GM23248 (cell line): ENCODE measurements at regions of chr6 and their contacts with region 1.

Region 1: GRCh38 chr6:138817822-138818308 is 22.0 kb downstream of the ECT2L start:
- DNase-seq: peak; percentile 88
- H3K4me3 ChIP-seq: no peak overlapping the region
- H3K27ac ChIP-seq: peak overlapping the region; percentile 66
- H3K4me1 ChIP-seq: peaks cover 8% of the 10 kb centered on the region
- H3K27me3 ChIP-seq: no peaks in the 10 kb centered on the region

Region 2: DNA sequence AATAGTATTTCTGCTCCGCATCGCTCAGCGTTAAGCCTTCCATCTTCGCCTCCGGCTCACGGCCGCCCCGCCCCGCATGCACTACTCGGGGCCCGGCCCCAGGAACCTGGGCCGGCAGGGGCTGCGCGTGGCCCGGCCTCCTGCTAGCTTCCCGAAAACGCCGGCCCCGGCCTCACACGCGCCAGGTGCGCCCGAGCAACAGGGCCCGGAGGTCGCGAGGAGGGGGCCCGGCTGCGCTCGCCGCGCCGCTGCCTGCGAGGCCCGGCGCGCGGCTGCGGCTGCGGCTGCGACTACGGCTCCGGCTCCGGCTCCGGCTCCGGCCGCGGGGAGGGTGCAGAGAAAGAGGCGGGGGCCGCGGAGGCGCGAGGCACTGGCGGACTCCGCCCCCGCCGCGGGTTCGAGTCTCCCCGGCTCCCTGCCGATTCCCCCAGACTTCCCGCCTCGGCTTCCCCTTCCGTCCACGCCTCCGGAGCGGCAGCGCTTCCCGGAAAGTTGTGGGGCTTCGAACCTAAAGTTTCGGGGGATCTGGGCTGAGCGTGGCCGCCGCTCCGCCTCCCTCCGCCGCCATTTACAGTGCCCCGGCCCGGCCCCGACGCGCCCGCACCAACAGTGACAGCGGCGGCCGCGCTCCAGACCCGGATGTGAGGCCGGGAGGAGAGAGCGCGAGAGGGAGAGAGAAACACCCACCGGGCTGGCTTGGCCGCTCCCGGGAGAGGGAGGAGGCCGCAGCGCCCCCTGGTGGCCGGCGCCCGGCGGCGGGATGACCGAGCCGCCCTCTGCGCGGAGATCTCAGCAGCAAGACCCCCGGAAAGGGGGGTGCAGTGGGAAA is 170.0 kb after region 1 on chr6 and contains the start of gene REPS1:
- in situ Hi-C with region 1: loop called (anchors 10 kb)
- DNase-seq: peak; percentile 97
- H3K4me3 ChIP-seq: peak within 1 kb of the TSS; percentile 81
- H3K27ac ChIP-seq: peak within 1 kb of the TSS; percentile 63
- H3K4me1 ChIP-seq: peaks cover 20% of the 10 kb centered on the region
- H3K27me3 ChIP-seq: no peaks in the 10 kb centered on the region
- total RNA-seq, gene REPS1: 21.1 and 24.4 TPM in 2 replicates

Region 3: DNA sequence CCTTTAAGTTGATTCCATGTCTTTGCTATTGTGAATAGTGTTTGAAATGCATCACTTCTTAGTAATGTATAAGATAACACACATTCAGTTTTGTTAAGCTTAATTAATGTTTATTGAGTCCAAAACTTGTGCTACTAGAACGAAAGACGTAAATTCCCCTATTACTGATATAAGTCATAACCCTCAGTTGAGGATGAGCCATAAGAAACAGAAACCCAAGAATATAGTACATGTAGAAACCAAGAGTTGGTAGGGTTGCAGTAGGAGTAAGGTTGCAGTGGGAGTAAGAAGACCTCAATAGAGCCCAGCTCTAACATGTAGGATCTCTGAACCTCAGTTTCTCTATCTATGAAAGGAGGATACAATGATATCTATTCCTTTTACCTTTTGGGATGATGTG is 537.3 kb after region 1 on chr6:
- in situ Hi-C with region 1: loop called (anchors 10 kb)
- DNase-seq: no peak
- H3K4me3 ChIP-seq: no peak overlapping the region
- H3K27ac ChIP-seq: no peak overlapping the region
- H3K4me1 ChIP-seq: no peaks in the 10 kb centered on the region
- H3K27me3 ChIP-seq: no peaks in the 10 kb centered on the region